ENCODE measurements at regions of chr12 and their contacts with region 1.

Region 1: DNA sequence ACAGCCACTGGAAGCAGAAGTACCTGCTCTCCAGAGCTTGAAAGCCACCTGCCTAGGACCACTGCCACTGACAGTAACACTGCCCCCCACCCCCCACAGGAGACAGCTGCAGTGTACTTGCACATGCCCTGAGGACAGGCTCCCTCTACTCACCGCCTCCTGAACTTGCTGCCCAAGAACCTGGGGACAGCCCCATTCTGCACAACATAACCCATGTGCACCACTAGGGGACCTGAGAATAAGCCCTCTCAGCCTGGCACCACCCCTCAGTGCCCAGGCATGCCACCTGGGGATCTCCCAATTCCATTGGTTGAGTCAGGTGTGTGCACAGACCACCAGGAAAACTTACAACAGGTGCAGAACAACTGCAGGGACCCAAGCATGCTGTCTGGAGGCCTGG is 67.1 kb upstream of the KIF21A start:
- DNase-seq: no peak
- H3K4me3 ChIP-seq: no peak overlapping the region
- H3K27ac ChIP-seq: no peak overlapping the region
- H3K4me1 ChIP-seq: 0 out of 2 replicates have a peak, but pooled peaks cover 2% of the 10 kb centered on the region
- H3K27me3 ChIP-seq: no peaks in the 10 kb centered on the region
- CTCF ChIP-seq: no peak

Region 2: DNA sequence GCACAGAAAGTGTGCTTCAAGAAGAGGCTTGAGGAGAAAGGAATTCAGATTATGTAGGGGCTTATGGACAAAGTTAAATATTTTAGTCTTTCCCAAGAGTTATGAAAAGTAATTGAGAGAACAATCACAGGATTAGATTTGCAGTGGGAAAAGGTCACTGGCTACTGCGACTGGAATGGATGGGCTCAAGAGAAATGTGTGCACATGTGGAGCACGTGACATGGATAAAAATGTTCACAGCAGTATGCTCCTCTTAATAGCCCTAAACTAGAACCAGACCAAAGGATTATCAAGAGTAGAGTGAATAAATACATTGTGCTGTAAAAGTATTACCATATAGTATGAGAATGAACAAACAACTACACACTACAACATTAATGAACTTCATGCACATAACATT is 31.5 kb after region 1 on chr12:
- CTCF ChIA-PET with region 1: no interaction called
- POLR2A ChIA-PET with region 1: no interaction called
- intact Hi-C with region 1: no loop called
- DNase-seq: no peak
- H3K4me3 ChIP-seq: no peak overlapping the region
- H3K27ac ChIP-seq: no peak overlapping the region
- H3K4me1 ChIP-seq: no peaks in the 10 kb centered on the region
- H3K27me3 ChIP-seq: no peaks in the 10 kb centered on the region
- CTCF ChIP-seq: no peak

Region 3: DNA sequence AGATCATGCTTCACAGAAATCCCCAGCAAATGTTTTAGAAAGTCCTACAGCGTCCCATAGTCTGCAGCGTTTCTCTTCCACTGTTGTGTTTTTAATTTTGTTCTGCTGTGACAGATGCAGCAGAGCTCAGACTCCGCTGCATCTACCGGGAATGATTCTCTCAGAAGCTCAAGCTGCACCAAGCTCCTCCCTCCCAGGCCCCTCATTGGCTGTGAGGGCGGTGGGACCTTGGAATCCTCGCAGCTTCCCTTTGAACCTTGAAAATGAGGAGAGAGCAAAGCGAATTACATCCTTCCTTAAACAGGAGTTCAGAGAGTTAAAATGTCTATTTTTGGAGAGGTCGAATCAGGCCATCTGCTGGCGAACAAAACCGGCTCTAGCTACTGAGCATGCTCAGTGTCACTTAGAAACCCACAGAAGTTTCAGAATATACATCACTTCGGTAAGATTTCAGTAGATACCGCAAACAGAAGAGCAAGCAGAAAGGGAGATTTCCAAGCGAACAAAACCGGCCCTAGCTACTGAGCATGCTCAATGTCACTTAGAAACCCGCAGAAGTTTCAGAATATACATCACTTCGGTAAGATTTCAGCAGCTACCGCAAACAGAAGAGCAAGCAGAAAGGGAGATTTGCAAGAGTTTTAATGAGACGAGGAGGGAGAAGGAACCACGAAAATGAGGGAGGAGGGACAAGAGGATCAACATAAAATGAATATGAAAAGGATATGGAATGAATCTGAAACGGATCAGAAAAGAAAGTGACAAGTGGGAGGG is 109.8 kb after region 1 on chr12 and contains the start of gene ABCD2:
- CTCF ChIA-PET with region 1: no interaction called
- POLR2A ChIA-PET with region 1: interaction called, 12 read pairs
- intact Hi-C with region 1: no loop called
- DNase-seq: peak in 1 of 2 experiments; percentile 37
- H3K4me3 ChIP-seq: peak within 1 kb of the TSS; percentile 68
- H3K27ac ChIP-seq: no peak within 1 kb of the TSS
- H3K4me1 ChIP-seq: no peaks in the 10 kb centered on the region; the same call in 1 of the 2 replicates
- H3K27me3 ChIP-seq: no peaks in the 10 kb centered on the region
- CTCF ChIP-seq: peak; percentile 26; the same call in 1 of the 2 replicates
- total RNA-seq, gene ABCD2: not detected in 2 replicates